Cardiac septum (tissue), 1 donor: ENCODE measurements at regions of chr22 and their contacts with region 1.

Region 1: DNA sequence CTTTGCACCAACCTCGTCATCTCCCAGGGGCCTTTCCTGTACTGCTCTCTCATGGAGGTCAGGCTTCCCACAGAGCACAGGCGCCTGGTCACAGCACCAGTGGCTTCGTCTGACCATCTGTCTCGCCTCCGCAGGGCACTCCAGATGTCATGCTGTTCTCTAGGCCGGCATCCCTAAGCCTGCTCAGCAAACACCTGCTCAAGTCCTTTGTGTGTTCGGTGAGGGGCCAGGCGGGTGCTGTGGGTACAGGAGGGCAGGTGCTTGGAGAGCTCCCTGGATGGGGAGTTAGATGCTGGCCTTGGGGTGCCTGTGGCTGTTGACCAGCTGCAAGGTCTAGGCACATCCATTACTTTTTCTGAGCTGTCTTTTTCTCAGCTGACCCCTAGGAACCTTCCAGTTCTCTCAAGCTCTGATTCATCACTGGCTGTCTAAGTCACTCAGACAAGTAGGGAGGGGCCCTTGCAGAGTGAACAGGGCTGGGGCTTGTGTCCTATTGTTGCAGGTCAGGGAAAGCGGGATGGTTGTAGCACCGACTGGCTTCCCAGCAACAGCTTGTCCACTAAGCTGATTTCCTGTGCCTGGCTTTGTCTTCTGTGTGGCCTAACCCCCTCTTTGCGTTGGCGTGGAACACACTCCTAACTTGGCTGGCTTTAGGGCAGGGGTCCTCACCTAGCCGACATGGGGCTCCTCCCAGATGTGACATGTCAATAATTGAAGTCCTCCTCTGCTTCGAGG is 9.2 kb downstream of the CLDN5 start:
- DNase-seq: peak; percentile 49

Region 2: GRCh38 chr22:19568337-19569275 is 53.6 kb after region 1 on chr22:
- intact Hi-C with region 1: loop called (anchors 10 kb)
- DNase-seq: no peak

Region 3: DNA sequence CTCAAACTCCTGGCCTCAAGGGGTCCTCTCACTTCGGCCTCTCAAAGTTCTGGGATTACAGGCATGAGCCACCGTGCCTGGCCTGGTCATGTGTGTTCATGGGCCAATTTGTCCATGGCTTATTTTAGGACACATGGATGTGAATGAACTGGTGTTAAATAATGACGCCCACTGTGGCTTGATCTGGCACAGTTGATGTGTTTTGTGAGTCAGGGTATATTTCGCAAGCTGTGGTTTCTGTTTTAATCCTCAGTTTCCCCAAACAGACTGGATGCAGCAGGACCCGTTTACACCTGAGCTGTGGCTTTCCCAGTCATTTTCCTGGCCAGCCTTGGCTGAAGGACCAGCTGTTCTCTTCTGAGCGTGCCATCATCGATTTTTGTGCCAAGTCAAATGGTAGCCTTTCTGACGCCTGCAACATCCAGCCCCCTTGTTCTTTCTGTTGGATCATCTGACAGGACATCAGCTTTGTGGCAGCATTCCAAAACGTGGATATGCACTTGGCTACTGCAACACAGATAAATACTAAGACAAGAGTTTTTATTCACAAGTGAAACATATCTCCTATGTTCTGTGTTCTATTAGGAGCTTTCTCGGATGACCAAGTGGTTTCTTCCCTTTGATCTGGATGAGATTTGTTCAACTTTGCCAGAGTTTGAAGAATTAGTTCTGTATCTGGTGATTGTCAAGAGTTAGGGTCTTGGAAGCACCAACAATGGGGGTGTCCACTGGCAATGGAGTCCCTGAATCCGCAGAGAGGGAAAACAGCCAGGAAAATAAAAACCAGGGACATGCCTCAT is 159.3 kb after region 1 on chr22:
- intact Hi-C with region 1: no loop called
- DNase-seq: no peak